ENCODE measurements at regions of chr1 and their contacts with region 1.

Region 1: GRCh38 chr1:1324521-1325287 is at the starts of genes CPTP and INTS11:
- DNase-seq: peak; percentile 93 to 97 (median 95)
- ATAC-seq: peak; percentile 93
- H3K4me3 ChIP-seq: peak within 1 kb of the TSS; percentile 77
- H3K4me3 Mint-ChIP-seq: peak within 1 kb of the TSS; percentile 83 to 96 (median 90)
- H3K27ac ChIP-seq: peak within 1 kb of the TSS; percentile 92
- H3K27ac Mint-ChIP-seq: peak within 1 kb of the TSS; percentile 67 to 94 (median 91)
- H3K4me1 ChIP-seq: peaks cover 18 to 34% of the 10 kb centered on the region in 2 donors
- H3K4me1 Mint-ChIP-seq: peaks cover 12 to 53% (median 31%) of the 10 kb centered on the region in 7 donors
- H3K27me3 ChIP-seq: no peaks in the 10 kb centered on the region
- H3K27me3 Mint-ChIP-seq: no peaks in the 10 kb centered on the region
- total RNA-seq, gene CPTP: 11.5 to 29.3 (median 19.1) TPM
- total RNA-seq, gene INTS11: 126 to 187 (median 161) TPM

Region 2: GRCh38 chr1:1349256-1350012 is 24.7 kb after region 1 on chr1 and contains the start of gene DVL1:
- CTCF ChIA-PET with region 1: no interaction called
- POLR2A ChIA-PET with region 1: interaction called, 6 read pairs
- intact Hi-C with region 1: loop called (anchors 1 kb)
- DNase-seq: peak; percentile 51 to 86 (median 78)
- ATAC-seq: peak; percentile 94
- H3K4me3 ChIP-seq: peak within 1 kb of the TSS; percentile 56
- H3K4me3 Mint-ChIP-seq: peak within 1 kb of the TSS; percentile 40 to 85 (median 76)
- H3K27ac ChIP-seq: peak within 1 kb of the TSS; percentile 92
- H3K27ac Mint-ChIP-seq: peak within 1 kb of the TSS in 5 of 9 donors; percentile 34 to 76 (median 56)
- H3K4me1 ChIP-seq: peaks cover 0 to 19% of the 10 kb centered on the region in 2 donors
- H3K4me1 Mint-ChIP-seq: peaks cover 13 to 34% (median 29%) of the 10 kb centered on the region in 7 donors
- H3K27me3 ChIP-seq: peaks cover 0 to 6% of the 10 kb centered on the region in 2 donors
- H3K27me3 Mint-ChIP-seq: peaks cover 0 to 24% (median 9%) of the 10 kb centered on the region in 5 donors
- total RNA-seq, gene DVL1: 40.2 to 54.9 (median 45.9) TPM

Region 3: GRCh38 chr1:1511533-1512285 is 187.0 kb after region 1 on chr1 and contains the start of gene ATAD3A:
- CTCF ChIA-PET with region 1: no interaction called
- POLR2A ChIA-PET with region 1: no interaction called
- intact Hi-C with region 1: no loop called
- DNase-seq: peak; percentile 84 to 96 (median 94)
- ATAC-seq: peak; percentile 96
- H3K4me3 ChIP-seq: peak within 1 kb of the TSS; percentile 98
- H3K4me3 Mint-ChIP-seq: peak within 1 kb of the TSS; percentile 82 to 94 (median 90)
- H3K27ac ChIP-seq: peak within 1 kb of the TSS; percentile 85
- H3K27ac Mint-ChIP-seq: peak within 1 kb of the TSS; percentile 81 to 96 (median 92)
- H3K4me1 ChIP-seq: peaks cover 4 to 5% of the 10 kb centered on the region in 2 donors
- H3K4me1 Mint-ChIP-seq: peaks cover 6 to 21% (median 14%) of the 10 kb centered on the region in 7 donors
- H3K27me3 ChIP-seq: no peaks in the 10 kb centered on the region
- H3K27me3 Mint-ChIP-seq: no peaks in the 10 kb centered on the region
- total RNA-seq, gene ATAD3A: 21.0 to 41.3 (median 22.9) TPM